HEK293 (cell line): ENCODE measurements at regions of chr18 and their contacts with region 1.

Region 1: DNA sequence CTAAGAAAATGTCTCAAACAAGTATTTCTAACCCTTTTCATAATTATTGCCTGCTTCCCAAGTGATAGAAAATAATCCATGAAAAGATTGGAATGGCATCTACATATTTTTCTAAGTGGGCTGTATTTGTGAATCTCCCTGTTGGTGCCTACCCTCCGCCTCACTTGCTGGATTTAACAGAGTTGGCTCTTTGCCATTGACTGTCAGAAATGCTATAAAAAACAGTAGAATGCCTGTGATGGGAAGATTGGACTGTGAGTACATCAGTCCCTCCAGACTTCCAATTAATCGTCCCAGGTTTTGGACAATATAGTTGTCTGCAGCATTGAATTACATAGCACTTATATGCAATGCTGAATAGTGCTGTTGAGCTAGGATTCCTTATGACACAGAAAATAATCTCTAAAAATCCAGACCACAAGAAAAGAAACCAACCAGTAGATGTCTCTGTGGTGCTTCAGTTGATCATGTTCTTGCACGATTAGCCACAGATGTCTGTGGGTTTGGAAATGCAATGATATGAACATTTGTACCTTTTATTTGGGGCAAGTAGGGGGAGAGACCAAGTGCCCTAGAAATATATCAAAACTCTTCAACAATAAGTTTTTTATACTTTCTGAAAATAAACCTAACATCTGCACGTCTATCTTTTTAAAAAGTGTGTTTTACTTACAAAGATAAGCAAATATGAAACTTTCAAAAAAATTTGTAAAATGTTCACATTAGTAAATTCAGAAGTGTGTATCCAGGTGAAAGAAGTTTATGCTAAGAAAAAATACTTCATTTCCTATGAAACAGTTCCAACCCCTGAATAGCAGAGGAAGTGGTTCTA is 88.5 kb downstream of the DYNAP start:
- H3K4me3 ChIP-seq: no peak overlapping the region
- H3K27ac ChIP-seq: no peak overlapping the region
- H3K4me1 ChIP-seq: no peaks in the 10 kb centered on the region; the same call in 1 of the 2 replicates
- CTCF ChIP-seq: peak; percentile 54; the same call in 1 of the 2 replicates

Region 2: GRCh38 chr18:54950221-54950620 is 270.7 kb after region 1 on chr18:
- CTCF ChIA-PET with region 1: interaction called, 18 read pairs
- POLR2A ChIA-PET with region 1: interaction called, 4 read pairs
- H3K4me3 ChIP-seq: no peak overlapping the region
- H3K27ac ChIP-seq: no peak overlapping the region
- H3K4me1 ChIP-seq: peaks cover 26% of the 10 kb centered on the region
- CTCF ChIP-seq: no peak